ENCODE measurements at regions of chrX and their contacts with region 1.

Region 1: DNA sequence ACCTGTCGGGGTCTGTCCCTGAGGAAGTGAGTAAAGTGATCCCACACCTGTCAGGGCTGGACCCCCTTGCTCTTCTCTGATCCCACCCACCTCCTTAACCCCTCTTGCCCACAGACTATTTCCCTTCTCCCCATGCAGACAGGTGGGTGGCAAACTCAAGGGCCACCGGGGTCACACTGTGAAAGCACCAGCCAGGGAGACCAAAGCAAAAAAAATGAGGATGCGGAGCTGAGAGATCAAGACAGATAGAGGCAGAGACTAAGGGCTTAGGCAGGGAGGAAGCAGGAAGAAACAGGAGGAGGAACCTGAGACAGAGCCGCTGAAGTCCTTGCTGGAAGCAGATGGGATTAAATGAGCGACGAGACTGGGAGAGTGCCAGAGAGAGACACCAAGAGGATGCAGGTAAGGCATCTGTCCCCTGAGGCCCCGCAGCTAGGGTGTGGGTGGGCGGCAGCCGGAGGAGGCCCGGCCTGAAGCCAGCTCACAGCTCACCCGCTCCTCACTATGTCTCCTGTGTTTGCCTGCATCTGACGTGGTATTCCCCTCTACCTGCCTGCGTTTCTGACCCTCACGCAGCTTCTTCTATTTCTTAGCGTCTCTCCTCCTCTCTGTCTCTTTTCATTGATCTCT is 7.2 kb downstream of the TIMM17B start:
- DNase-seq: no peak
- H3K4me3 ChIP-seq: no peak overlapping the region
- H3K4me3 Mint-ChIP-seq: peak overlapping the region; percentile 53
- H3K27ac Mint-ChIP-seq: peak overlapping the region; percentile 32
- H3K4me1 ChIP-seq: no peaks in the 10 kb centered on the region
- H3K4me1 Mint-ChIP-seq: peaks cover 9% of the 10 kb centered on the region
- H3K27me3 ChIP-seq: no peaks in the 10 kb centered on the region
- H3K27me3 Mint-ChIP-seq: no peaks in the 10 kb centered on the region
- CTCF ChIP-seq: no peak

Region 2: DNA sequence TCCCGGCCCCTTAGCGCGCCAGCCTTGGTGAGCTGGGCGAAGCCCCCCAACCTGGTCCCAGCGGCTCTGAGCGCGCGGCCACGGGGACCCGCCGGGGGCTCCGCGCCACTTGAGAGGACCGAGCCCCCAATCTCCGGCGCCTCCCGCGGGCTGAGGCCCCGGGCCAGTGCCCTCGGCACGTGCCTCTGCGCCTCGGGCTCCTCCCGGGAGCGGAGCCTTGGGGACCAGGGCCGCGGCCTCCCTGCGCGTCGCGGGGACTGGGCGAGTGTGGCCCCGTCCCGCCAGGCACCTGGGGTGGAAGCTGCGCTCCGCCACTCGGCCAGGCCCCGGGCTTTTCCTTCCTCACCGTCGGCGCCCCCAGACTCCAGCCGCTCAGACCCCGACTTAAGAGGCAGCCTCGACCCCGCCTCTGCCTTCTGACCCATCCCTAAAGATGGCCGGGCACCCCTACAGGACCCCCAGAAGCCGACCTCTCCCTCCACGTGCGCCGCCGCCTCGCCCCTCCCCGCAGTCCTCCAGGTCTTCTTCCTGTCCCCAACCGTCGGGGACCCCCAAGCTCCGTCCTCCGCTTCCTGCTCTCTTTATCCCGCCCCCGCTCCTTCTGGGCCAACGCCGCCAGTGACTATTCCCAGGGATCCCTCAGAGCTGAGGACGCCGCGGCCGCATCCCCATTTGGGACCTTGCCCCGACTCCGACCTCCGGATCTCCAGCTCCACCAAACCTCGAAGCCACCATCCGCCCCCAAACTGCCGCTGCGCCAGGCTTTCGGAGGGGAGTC is 63.3 kb before region 1 on chrX:
- CTCF ChIA-PET with region 1: interaction called, 10 read pairs
- POLR2A ChIA-PET with region 1: no interaction called
- intact Hi-C with region 1: no loop called
- DNase-seq: no peak
- H3K4me3 ChIP-seq: no peak overlapping the region
- H3K4me3 Mint-ChIP-seq: no peak overlapping the region
- H3K27ac Mint-ChIP-seq: no peak overlapping the region
- H3K4me1 ChIP-seq: no peaks in the 10 kb centered on the region
- H3K4me1 Mint-ChIP-seq: no peaks in the 10 kb centered on the region
- H3K27me3 ChIP-seq: no peaks in the 10 kb centered on the region
- H3K27me3 Mint-ChIP-seq: no peaks in the 10 kb centered on the region
- CTCF ChIP-seq: no peak

Measured in Caco-2 (cell line).